ENCODE measurements at regions of chr15 and their contacts with region 1.

Region 1: DNA sequence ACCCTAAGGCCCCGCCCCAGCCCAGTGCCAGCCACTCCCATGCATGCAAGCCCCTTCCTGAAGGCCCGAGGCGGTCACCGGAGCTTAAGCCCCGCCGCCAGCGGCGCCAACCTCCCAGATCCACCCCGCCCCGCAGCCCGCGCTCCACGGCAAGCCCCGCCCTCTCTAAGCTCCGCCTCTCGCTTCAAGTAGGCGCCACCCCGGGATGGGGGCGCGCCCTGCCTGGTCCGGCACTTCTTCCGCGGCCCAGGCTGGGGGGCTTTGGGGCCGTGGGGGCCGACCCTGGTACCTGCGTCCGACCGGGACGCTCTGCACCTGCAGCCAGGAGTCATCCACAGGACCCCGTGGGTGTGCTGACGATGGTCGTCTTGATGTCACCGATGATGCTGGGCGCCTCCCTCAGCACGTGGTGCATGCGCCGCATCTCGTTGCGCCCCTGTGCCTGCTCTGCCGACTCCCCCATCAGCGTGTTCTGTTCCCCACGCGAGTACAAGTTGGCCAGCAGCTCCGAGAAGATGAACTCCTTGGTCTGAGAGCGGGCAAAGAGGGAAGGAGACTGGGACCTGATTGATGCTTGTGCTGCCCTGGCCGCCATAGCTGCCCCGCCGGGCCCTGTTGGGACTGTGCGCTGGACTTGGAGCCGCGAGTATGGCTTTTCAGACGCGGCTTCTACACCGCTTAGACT is 26.1 kb upstream of the CSPG4 start:
- DNase-seq: peak; percentile 87 to 89 (median 88)
- H3K4me3 ChIP-seq: peak overlapping the region; percentile 42 to 70
- H3K4me3 Mint-ChIP-seq: peak overlapping the region; percentile 82 to 87 (median 86)
- H3K27ac ChIP-seq: peak overlapping the region; percentile 53
- H3K27ac Mint-ChIP-seq: peak overlapping the region; percentile 40 to 92 (median 88)
- H3K4me1 ChIP-seq: peaks cover 13% of the 10 kb centered on the region
- H3K4me1 Mint-ChIP-seq: peaks cover 5 to 17% (median 5%) of the 10 kb centered on the region in 4 donors
- H3K27me3 ChIP-seq: no peaks in the 10 kb centered on the region
- H3K27me3 Mint-ChIP-seq: peaks cover 2 to 5% of the 10 kb centered on the region in 2 donors

Region 2: GRCh38 chr15:75758071-75758872 is 19.5 kb after region 1 on chr15:
- CTCF ChIA-PET with region 1: interaction called, 3 read pairs
- POLR2A ChIA-PET with region 1: interaction called, 3 read pairs
- intact Hi-C with region 1: loop called (anchors 2 kb)
- DNase-seq: peak; percentile 27 to 67 (median 35)
- H3K4me3 ChIP-seq: peak overlapping the region; percentile 66 to 82
- H3K4me3 Mint-ChIP-seq: peak overlapping the region; percentile 79 to 92 (median 88)
- H3K27ac ChIP-seq: peak overlapping the region; percentile 36
- H3K27ac Mint-ChIP-seq: peak overlapping the region; percentile 67 to 84 (median 72)
- H3K4me1 ChIP-seq: peaks cover 8% of the 10 kb centered on the region
- H3K4me1 Mint-ChIP-seq: peaks cover 5 to 26% (median 13%) of the 10 kb centered on the region in 4 donors
- H3K27me3 ChIP-seq: no peaks in the 10 kb centered on the region
- H3K27me3 Mint-ChIP-seq: peaks cover 0 to 2% of the 10 kb centered on the region in 2 donors

Region 3: DNA sequence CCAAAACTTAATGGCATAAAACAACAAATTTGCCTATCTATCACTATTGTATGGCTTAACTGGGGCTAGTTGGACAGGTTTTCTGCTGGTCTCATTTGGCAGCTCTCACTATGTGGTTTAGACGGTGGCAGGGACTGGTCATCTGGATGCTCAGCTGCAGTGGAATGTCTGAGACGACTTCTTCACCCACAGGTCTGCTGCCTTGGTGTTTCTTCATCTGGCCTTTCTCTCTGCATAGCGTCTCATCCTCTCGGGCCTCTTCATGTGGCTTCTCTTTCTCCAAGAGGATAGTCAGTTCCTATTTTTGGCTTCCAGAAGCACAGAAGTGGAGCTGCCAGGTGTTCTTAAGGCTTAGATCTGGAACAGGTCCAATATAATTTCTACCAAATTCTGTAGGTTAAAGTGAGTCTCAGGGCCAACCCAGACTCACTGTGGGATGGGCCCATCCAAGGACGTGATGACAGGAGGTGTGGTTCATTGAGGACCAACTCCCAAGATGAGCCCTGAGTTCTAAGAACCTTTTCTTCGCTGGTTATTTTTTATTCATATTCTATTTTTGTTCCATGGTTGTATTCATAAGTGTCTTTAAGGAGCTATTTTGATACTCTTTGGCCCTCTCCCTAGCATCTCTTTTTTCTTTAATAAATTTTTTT is 123.1 kb after region 1 on chr15:
- CTCF ChIA-PET with region 1: no interaction called
- POLR2A ChIA-PET with region 1: no interaction called
- intact Hi-C with region 1: no loop called
- DNase-seq: no peak
- H3K4me3 ChIP-seq: no peak overlapping the region
- H3K4me3 Mint-ChIP-seq: no peak overlapping the region
- H3K27ac ChIP-seq: no peak overlapping the region
- H3K27ac Mint-ChIP-seq: peak overlapping the region in 3 of 7 donors; percentile 7 to 59 (median 29)
- H3K4me1 ChIP-seq: peaks cover 10% of the 10 kb centered on the region
- H3K4me1 Mint-ChIP-seq: peaks cover 32 to 70% (median 48%) of the 10 kb centered on the region in 4 donors
- H3K27me3 ChIP-seq: no peaks in the 10 kb centered on the region
- H3K27me3 Mint-ChIP-seq: no peaks in the 10 kb centered on the region

Region 4: DNA sequence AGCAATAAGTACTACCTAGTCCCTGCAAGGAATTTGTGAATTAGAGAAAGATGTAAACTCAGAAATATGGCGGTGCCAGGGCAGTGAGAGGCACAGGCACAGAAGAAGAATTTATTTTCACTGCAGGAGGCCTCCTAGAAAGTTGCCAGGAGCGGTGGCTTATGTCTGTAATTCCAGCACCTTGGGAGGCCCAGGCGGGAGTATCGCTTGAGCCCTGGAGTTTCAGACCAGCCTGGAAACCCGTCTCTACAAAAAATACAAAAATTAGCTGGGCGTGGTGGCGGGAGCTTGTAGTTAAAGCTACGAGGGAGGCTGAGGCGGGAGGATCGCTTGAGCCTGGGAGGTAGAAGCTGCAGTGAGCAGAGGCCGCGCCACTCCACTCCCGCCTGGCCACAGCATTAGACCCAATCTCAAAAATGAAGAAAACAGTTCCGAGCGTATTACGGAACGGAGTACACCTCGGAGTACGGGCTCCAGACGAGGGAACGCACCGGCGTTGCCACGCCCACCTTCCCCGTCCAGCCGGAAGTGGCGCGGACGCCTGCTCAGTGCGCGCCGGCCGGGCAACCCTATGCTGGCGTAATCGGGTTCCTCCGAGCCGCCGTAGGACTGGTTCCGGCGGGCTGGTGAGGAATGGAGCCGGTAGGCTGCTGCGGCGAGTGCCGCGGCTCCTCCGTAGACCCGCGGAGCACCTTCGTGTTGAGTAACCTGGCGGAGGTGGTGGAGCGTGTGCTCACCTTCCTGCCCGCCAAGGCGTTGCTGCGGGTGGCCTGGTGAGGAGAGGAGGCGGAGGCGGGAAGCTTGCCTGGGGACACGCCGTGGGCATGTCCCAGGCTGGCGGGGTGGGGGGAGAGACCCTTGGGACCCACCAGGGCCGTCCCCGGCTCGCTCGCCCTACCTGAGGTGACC is 164.8 kb after region 1 on chr15 and contains the start of gene FBXO22:
- CTCF ChIA-PET with region 1: no interaction called
- POLR2A ChIA-PET with region 1: interaction called, 3 read pairs
- intact Hi-C with region 1: loop called (anchors 10 kb)
- DNase-seq: peak; percentile 86 to 89 (median 87)
- H3K4me3 ChIP-seq: peak within 1 kb of the TSS; percentile 80 to 96
- H3K4me3 Mint-ChIP-seq: peak within 1 kb of the TSS; percentile 96 to 99 (median 98)
- H3K27ac ChIP-seq: peak within 1 kb of the TSS; percentile 70
- H3K27ac Mint-ChIP-seq: peak within 1 kb of the TSS; percentile 93 to 98 (median 96)
- H3K4me1 ChIP-seq: peaks cover 31% of the 10 kb centered on the region
- H3K4me1 Mint-ChIP-seq: peaks cover 19 to 55% (median 39%) of the 10 kb centered on the region in 4 donors
- H3K27me3 ChIP-seq: no peaks in the 10 kb centered on the region
- H3K27me3 Mint-ChIP-seq: no peaks in the 10 kb centered on the region
- total RNA-seq, gene FBXO22: 29.7 to 30.1 TPM